PC-9 (cell line): ENCODE measurements at regions of chr12 and their contacts with region 1.

Region 1: DNA sequence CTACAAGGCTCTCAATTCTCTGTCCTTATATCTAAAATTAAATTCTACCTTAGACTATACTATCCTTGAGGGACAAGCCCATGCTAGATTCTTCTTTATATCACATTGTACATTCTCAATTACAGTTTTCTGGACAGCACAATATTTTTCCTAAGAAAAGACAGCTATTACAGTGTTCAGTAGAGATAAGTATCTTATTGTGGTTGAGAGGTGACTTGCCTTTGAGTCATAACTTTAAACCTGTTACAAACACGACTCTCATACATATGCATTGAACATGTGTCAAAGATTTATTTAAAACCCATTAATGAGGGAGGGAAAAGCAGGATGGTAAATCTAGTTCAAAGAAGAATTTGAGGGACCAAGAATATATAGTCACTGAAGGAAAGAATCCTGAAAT is 61.1 kb downstream of the TPH2 start:
- DNase-seq: peak in 1 of 2 experiments; percentile 37
- H3K4me3 ChIP-seq: no peak overlapping the region
- H3K27ac ChIP-seq: no peak overlapping the region
- H3K4me1 ChIP-seq: no peaks in the 10 kb centered on the region
- H3K27me3 ChIP-seq: no peaks in the 10 kb centered on the region
- CTCF ChIP-seq: no peak

Region 2: GRCh38 chr12:71938728-71939385 is 60.9 kb before region 1 on chr12 and contains the start of gene TPH2:
- CTCF ChIA-PET with region 1: no interaction called
- POLR2A ChIA-PET with region 1: interaction called, 10 read pairs
- intact Hi-C with region 1: no loop called
- DNase-seq: peak in 1 of 2 experiments; percentile 31
- H3K4me3 ChIP-seq: no peak within 1 kb of the TSS
- H3K27ac ChIP-seq: no peak within 1 kb of the TSS
- H3K4me1 ChIP-seq: no peaks in the 10 kb centered on the region
- H3K27me3 ChIP-seq: no peaks in the 10 kb centered on the region
- CTCF ChIP-seq: peak; percentile 62
- total RNA-seq, gene TPH2: not detected in 2 replicates

Region 3: GRCh38 chr12:71981149-71981548 is 18.6 kb before region 1 on chr12:
- CTCF ChIA-PET with region 1: no interaction called
- POLR2A ChIA-PET with region 1: no interaction called
- intact Hi-C with region 1: no loop called
- DNase-seq: no peak
- H3K4me3 ChIP-seq: no peak overlapping the region
- H3K27ac ChIP-seq: no peak overlapping the region
- H3K4me1 ChIP-seq: no peaks in the 10 kb centered on the region
- H3K27me3 ChIP-seq: no peaks in the 10 kb centered on the region
- CTCF ChIP-seq: no peak